Activated T-helper 1 cell treated with anti-CD3 and anti-CD28 coated beads, Interleukin-12 subunit alpha, Interleukin-12 subunit beta, Interleukin-2, Interleukin-4 antibody, amounts not matched to agents 30 ng/mL and 10 ng/mL and 1 ng/mL, durations not matched to agents 14 hours and 24 hours and 36 hours (primary cell): ENCODE measurements at regions of chr6 and their contacts with region 1.

Region 1: DNA sequence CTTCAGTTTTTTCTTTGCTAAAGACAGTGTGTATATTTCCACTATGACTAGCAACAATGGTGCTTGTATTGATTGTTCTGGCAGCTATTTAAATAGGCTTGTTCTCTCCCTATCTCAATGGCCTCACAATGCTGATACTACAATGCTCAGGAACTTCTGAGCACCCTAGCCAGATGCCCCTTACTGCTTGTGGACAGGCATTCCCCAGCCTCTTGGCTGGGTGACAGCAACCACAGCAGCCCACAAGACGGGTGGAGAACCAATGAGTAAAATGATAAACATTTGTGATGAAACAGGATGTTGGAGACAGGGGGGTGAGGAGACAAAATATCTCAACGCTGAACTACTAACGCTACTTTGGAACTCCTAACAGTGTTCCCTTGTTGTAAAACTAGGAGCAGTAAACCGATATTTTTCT is 42.3 kb downstream of the HIVEP2 start:
- DNase-seq: peak; percentile 76
- H3K4me3 Mint-ChIP-seq: peak overlapping the region; percentile 49
- H3K27ac Mint-ChIP-seq: peak overlapping the region; percentile 91
- H3K4me1 Mint-ChIP-seq: peaks cover 63% of the 10 kb centered on the region
- H3K27me3 Mint-ChIP-seq: no peaks in the 10 kb centered on the region

Region 2: DNA sequence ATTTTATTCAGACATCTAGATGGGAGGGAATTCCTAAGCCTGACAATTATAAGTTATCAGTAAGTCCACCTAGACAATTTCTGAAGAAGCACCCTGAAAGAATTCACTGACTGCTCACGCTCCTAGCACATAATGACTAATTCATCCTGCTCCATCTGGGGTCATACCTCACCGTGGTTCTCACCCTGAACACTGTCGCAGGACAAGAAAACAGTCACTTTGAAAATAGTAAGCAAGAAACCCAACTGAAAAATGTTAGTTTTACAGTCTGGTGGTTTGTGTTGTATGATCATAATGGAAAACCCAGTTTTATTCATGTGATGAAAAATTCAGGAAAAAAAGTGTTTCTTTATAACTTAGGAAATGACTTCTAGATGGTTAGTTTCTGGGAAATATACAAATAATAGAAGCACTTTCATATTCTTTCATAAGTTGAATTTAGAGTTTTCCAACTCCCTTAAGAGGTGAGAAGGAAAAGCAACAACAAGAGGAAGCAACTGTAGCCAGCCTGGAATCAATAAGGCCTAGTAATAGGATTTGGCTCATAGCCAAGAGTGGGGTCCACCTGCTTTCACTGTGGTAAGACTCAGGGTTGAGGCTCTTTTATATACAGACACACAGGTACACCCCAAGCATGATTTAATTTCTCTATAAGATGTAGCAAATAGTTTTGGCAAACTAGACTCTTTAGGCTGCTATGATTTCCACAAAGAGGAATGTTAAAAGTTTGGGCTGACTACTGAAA is 51.8 kb before region 1 on chr6:
- intact Hi-C with region 1: loop called (anchors 1 kb)
- DNase-seq: peak; percentile 41
- H3K4me3 Mint-ChIP-seq: peak overlapping the region; percentile 40
- H3K27ac Mint-ChIP-seq: peak overlapping the region; percentile 89
- H3K4me1 Mint-ChIP-seq: peaks cover 91% of the 10 kb centered on the region
- H3K27me3 Mint-ChIP-seq: no peaks in the 10 kb centered on the region

Region 3: DNA sequence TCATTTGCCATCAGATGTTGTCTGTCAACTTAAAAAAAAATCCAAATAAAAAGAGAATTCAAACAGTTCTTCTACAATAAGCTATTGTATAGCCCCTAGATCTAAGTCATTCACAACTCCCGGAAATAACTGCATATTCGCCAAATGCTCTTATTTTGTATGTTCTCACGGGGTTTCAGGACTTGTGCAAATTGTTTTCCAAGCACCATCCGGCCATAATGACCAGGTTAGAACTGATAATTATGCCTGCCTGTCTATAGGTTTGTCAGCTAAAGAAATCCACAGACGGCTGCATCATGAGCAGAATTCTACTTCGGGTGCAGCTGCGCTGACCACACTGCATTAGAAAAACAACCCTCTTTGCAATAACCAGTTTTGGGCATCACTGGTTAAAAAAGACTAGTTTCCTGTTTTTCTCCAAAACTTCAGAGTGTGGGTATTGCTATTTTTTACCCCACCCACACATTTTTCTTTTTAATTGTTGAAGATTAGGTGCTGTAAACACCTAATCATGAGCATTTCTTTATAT is 45.3 kb before region 1 on chr6:
- intact Hi-C with region 1: loop called (anchors 1 kb)
- DNase-seq: no peak
- H3K4me3 Mint-ChIP-seq: peak overlapping the region; percentile 80
- H3K27ac Mint-ChIP-seq: peak overlapping the region; percentile 95
- H3K4me1 Mint-ChIP-seq: peaks cover 81% of the 10 kb centered on the region
- H3K27me3 Mint-ChIP-seq: no peaks in the 10 kb centered on the region